Stomach (tissue), 19 donors: ENCODE measurements at regions of chr1 and their contacts with region 1.

Region 1: GRCh38 chr1:247210376-247211117 is 38.7 kb upstream of the ZNF124 start:
- DNase-seq: peak; percentile 98 to 99
- H3K4me3 ChIP-seq: peak overlapping the region; percentile 75 to 95 (median 88)
- H3K27ac ChIP-seq: peak overlapping the region; percentile 89 to 98 (median 93)
- H3K4me1 ChIP-seq: peaks cover 11 to 35% (median 29%) of the 10 kb centered on the region in 4 donors
- H3K27me3 ChIP-seq: no peaks in the 10 kb centered on the region
- CTCF ChIP-seq: no peak
- EP300 ChIP-seq: no peak
- POLR2A ChIP-seq: peak in 2 of 4 donors; percentile 37 to 53

Region 2: GRCh38 chr1:246971090-246971721 is 239.3 kb before region 1 on chr1:
- intact Hi-C with region 1: no loop called
- DNase-seq: peak; percentile 14 to 63
- H3K4me3 ChIP-seq: no peak overlapping the region
- H3K27ac ChIP-seq: no peak overlapping the region
- H3K4me1 ChIP-seq: no peaks in the 10 kb centered on the region
- H3K27me3 ChIP-seq: no peaks in the 10 kb centered on the region
- CTCF ChIP-seq: peak in 5 of 7 experiments; percentile 35 to 76 (median 55)
- EP300 ChIP-seq: no peak
- POLR2A ChIP-seq: no peak

Region 3: DNA sequence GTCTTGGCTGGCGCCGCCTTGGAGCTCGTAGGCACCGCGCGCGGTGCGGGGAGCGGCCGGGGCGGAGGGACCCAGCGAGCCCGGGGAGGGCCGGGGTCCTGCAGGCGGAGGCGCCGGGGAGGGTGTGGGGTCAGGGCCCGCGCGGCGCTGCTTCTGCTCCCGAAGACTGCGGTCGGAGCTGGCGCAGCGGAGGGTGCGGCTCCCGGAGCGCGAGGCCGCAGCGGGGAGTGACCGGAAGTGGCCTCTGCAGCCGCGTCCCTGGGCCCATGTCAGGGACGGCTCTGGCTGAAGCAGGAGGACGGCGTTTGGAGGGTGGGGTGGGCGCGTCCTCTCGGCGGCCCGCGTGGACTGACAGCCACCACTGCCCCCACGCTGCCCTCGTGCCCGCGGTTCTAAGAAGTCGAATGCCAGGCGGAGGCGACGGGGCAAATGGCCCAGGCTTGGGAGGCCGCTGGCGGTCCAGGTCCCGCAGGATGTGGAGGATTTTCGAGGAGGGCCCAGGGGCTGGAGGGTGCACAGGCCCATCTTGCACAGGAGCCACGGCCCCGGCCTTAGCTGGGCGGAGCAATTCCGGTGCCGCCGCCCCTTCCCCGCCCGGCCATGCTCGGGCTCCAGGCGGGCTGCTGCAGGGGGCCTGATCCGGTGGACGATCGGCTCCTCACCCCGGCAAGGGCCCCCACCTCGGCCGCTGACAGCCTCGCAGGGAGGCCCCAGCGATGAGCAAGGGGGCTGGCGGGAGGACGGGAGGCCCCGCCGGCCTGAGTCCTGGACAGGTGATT is 98.7 kb before region 1 on chr1:
- intact Hi-C with region 1: loop called (anchors 10 kb)
- DNase-seq: peak; percentile 73 to 86
- H3K4me3 ChIP-seq: peak overlapping the region; percentile 66 to 86 (median 73)
- H3K27ac ChIP-seq: peak overlapping the region; percentile 81 to 90 (median 84)
- H3K4me1 ChIP-seq: peaks cover 12 to 27% (median 25%) of the 10 kb centered on the region in 4 donors
- H3K27me3 ChIP-seq: peaks cover 0 to 19% (median 4%) of the 10 kb centered on the region in 3 donors
- CTCF ChIP-seq: no peak
- EP300 ChIP-seq: no peak
- POLR2A ChIP-seq: no peak